ENCODE measurements at regions of chr2 and their contacts with region 1.

Region 1: GRCh38 chr2:203814661-203815540 is 52.7 kb upstream of the CTLA4 start:
- DNase-seq: peak; percentile 25 to 85 (median 42)
- ATAC-seq: peak; percentile 89
- H3K4me3 ChIP-seq: peak overlapping the region; percentile 25
- H3K4me3 Mint-ChIP-seq: peak overlapping the region; percentile 85
- H3K27ac ChIP-seq: no peak overlapping the region
- H3K27ac Mint-ChIP-seq: peak overlapping the region; percentile 52
- H3K4me1 ChIP-seq: peaks cover 39% of the 10 kb centered on the region
- H3K4me1 Mint-ChIP-seq: peaks cover 52% of the 10 kb centered on the region
- H3K27me3 ChIP-seq: no peaks in the 10 kb centered on the region
- H3K27me3 Mint-ChIP-seq: no peaks in the 10 kb centered on the region
- CTCF ChIP-seq: peak; percentile 81

Region 2: DNA sequence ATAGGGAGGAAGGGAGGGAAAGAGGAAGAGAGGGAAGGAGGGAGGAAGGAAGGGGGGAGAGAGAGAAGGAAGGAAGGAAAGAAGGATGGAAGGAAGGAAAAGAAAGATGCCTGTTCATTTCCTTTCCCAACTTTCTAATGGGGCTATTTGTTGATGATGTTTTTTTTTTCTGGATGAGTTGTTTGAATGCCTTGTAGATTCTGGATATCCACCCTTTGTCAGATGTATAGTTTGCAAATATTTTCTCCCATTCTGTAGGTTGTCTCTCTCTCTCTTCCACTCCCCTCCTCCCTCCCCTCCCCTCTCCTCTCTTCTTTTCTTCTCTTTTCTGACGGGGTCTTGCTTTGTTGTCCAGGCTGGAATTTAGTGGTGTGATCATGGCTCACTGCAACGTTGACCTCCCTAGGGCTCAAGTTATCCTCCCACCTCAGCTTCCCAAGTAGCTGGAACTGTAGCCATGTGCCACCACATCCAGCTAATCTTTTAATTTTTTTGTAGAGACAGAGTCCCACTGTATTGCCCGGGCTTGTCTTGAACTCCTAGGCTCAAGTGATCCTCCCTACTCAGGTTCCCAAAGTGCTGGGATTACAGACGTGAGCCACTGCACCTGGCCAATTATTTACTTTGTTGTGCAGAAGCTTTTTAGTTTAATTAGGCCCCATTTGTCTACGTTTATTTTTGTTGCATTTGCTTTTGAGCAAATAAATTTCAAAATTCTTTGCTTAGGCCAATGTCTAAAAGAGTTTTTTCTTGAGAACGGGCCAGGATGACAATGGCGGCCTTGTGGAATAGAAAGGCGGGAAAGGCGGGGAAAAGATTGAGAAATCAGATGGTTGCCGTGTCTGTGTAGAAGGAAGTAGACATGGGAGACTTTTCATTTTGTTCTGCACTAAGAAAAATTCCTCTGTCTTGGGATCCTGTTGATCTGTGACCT is 1237.4 kb before region 1 on chr2:
- CTCF ChIA-PET with region 1: no interaction called
- POLR2A ChIA-PET with region 1: no interaction called
- intact Hi-C with region 1: loop called in 1 of 2 experiments (anchors 5 kb)
- DNase-seq: no peak
- ATAC-seq: no peak
- H3K4me3 ChIP-seq: no peak overlapping the region
- H3K4me3 Mint-ChIP-seq: no peak overlapping the region
- H3K27ac ChIP-seq: no peak overlapping the region
- H3K27ac Mint-ChIP-seq: no peak overlapping the region
- H3K4me1 ChIP-seq: no peaks in the 10 kb centered on the region
- H3K4me1 Mint-ChIP-seq: no peaks in the 10 kb centered on the region
- H3K27me3 ChIP-seq: no peaks in the 10 kb centered on the region
- H3K27me3 Mint-ChIP-seq: no peaks in the 10 kb centered on the region
- CTCF ChIP-seq: no peak

Region 3: GRCh38 chr2:203280428-203281064 is 534.4 kb before region 1 on chr2:
- CTCF ChIA-PET with region 1: no interaction called
- POLR2A ChIA-PET with region 1: interaction called, 4 read pairs
- intact Hi-C with region 1: loop called in 1 of 2 experiments (anchors 10 kb)
- DNase-seq: no peak
- ATAC-seq: no peak
- H3K4me3 ChIP-seq: no peak overlapping the region
- H3K4me3 Mint-ChIP-seq: no peak overlapping the region
- H3K27ac ChIP-seq: no peak overlapping the region
- H3K27ac Mint-ChIP-seq: no peak overlapping the region
- H3K4me1 ChIP-seq: no peaks in the 10 kb centered on the region
- H3K4me1 Mint-ChIP-seq: no peaks in the 10 kb centered on the region
- H3K27me3 ChIP-seq: no peaks in the 10 kb centered on the region
- H3K27me3 Mint-ChIP-seq: no peaks in the 10 kb centered on the region
- CTCF ChIP-seq: no peak

Region 4: GRCh38 chr2:203718087-203718486 is 96.8 kb before region 1 on chr2:
- CTCF ChIA-PET with region 1: interaction called, 8 read pairs
- POLR2A ChIA-PET with region 1: interaction called, 28 read pairs
- intact Hi-C with region 1: no loop called
- DNase-seq: peak in 10 of 14 experiments; percentile 29 to 83 (median 44)
- ATAC-seq: peak; percentile 45
- H3K4me3 ChIP-seq: peak overlapping the region; percentile 21
- H3K4me3 Mint-ChIP-seq: peak overlapping the region; percentile 75
- H3K27ac ChIP-seq: peak overlapping the region; percentile 70 to 72
- H3K27ac Mint-ChIP-seq: peak overlapping the region; percentile 92
- H3K4me1 ChIP-seq: peaks cover 81% of the 10 kb centered on the region
- H3K4me1 Mint-ChIP-seq: peaks cover 97% of the 10 kb centered on the region
- H3K27me3 ChIP-seq: no peaks in the 10 kb centered on the region
- H3K27me3 Mint-ChIP-seq: no peaks in the 10 kb centered on the region
- CTCF ChIP-seq: no peak

Region 5: DNA sequence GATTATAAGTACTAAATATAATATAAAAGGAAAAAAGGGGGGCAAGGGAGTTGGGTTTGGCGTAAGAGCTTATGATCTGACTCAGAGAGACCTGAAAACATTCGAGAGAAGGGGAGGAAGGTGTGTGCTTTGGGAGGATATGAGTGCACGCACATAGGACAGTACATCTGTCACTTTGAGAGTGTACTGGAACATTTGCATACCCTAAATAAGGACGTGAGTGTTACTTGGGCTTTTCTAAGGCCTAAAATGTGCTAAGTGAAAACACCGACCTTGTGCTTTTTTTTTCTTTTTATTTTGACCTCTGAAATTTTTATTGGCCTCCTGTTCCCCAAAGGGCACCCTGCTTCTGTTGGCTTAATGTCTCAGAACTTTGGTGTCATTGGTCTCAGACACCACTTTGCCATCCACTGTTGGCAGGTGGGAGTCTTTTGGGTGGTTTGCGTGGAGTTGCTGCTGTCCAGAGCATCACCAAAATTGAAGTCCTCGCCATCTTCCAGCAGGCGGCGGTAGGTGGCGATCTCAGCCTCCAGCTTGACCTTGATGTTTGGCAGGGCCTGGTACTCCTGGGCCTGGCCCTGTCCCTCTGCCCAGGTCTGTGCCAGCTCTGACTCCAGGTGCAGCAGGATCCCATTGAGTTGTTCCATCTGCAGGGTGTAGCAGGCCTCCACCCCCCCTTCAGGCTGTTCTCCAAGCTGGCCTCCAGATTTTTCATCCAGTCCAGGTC is 50.8 kb before region 1 on chr2:
- CTCF ChIA-PET with region 1: no interaction called
- POLR2A ChIA-PET with region 1: no interaction called
- intact Hi-C with region 1: no loop called
- DNase-seq: peak in 6 of 14 experiments; percentile 23 to 45 (median 38)
- ATAC-seq: peak; percentile 96
- H3K4me3 ChIP-seq: no peak overlapping the region
- H3K4me3 Mint-ChIP-seq: peak overlapping the region; percentile 39
- H3K27ac ChIP-seq: peak overlapping the region; percentile 36 to 42
- H3K27ac Mint-ChIP-seq: peak overlapping the region; percentile 86
- H3K4me1 ChIP-seq: peaks cover 43% of the 10 kb centered on the region
- H3K4me1 Mint-ChIP-seq: peaks cover 86% of the 10 kb centered on the region
- H3K27me3 ChIP-seq: no peaks in the 10 kb centered on the region
- H3K27me3 Mint-ChIP-seq: no peaks in the 10 kb centered on the region
- CTCF ChIP-seq: no peak

Region 6: DNA sequence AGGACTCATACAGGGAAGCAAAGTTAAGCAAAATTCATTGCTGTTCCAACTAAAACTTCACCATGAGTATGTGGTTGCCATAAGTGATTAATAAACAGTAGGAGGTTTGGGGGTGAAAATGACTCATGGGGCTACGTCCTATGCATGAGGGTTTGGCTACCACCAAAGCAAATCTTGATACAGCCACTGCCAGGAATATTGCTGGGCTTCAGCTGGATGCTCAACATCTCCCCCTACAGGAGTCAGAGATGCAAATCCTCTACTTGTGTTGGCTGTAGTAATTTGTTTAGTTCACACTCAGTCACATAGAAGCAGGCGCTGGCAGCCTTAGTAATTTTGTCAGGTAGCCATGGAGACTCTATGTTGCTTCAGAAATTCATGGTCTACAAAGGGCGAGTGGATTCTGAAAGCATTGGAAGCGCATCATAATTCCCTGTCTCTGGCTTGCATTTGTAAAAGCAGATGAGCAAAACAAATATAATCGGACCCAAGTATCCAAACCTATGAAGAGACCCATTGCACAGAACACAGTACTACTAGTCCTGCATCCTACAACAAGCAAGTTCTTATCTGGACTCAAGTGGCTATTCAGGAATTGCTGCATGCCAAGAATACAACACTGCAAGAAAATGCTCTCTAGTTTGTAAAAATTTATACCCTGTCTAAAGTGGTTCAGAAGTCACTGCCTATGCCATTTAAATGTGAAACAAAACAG is 32.5 kb before region 1 on chr2:
- CTCF ChIA-PET with region 1: interaction called, 11 read pairs
- POLR2A ChIA-PET with region 1: interaction called, 3 read pairs
- intact Hi-C with region 1: no loop called
- DNase-seq: peak; percentile 35 to 86 (median 52)
- ATAC-seq: peak; percentile 92
- H3K4me3 ChIP-seq: no peak overlapping the region
- H3K4me3 Mint-ChIP-seq: no peak overlapping the region
- H3K27ac ChIP-seq: no peak overlapping the region
- H3K27ac Mint-ChIP-seq: peak overlapping the region; percentile 62
- H3K4me1 ChIP-seq: peaks cover 20% of the 10 kb centered on the region
- H3K4me1 Mint-ChIP-seq: peaks cover 54% of the 10 kb centered on the region
- H3K27me3 ChIP-seq: no peaks in the 10 kb centered on the region
- H3K27me3 Mint-ChIP-seq: no peaks in the 10 kb centered on the region
- CTCF ChIP-seq: peak; percentile 79

Region 7: DNA sequence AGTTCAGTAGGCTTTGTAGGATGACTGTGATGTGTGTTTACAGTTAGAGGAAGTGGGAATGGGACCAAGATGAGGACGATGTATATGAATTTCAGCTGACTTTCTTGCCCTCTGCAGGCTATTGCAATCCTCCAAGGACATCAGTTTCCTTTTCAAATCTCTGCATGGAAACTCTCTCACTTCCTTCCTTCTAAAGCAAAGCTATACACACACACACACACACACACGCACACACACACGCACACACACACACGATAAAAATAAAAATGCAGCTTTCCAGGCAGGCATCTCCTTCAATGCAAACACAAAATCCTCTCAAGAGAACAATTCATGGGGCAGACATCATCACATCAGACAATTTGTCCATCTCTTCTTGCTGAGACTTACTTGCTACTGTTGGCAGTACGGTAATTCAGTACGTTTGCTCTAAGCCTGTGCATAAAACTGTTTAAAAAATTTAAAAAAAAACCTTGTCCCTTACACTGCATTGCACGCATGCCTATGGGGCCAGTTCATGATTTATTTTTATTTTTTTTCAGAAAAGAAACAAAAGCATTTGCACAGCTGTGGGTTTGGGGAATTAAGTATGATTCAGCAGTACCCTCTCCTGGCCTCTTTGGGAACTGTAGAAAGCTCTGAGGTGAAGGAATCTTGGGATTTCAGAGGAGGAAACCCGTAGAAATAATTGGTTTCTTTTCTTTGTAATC is 94.5 kb after region 1 on chr2:
- CTCF ChIA-PET with region 1: interaction called, 19 read pairs
- POLR2A ChIA-PET with region 1: interaction called, 9 read pairs
- intact Hi-C with region 1: loop called (anchors 1 kb)
- DNase-seq: peak in 7 of 14 experiments; percentile 10 to 70 (median 45)
- ATAC-seq: peak; percentile 82
- H3K4me3 ChIP-seq: peak overlapping the region; percentile 39
- H3K4me3 Mint-ChIP-seq: peak overlapping the region; percentile 5
- H3K27ac ChIP-seq: no peak overlapping the region
- H3K27ac Mint-ChIP-seq: peak overlapping the region; percentile 18
- H3K4me1 ChIP-seq: peaks cover 13% of the 10 kb centered on the region
- H3K4me1 Mint-ChIP-seq: peaks cover 19% of the 10 kb centered on the region
- H3K27me3 ChIP-seq: no peaks in the 10 kb centered on the region
- H3K27me3 Mint-ChIP-seq: no peaks in the 10 kb centered on the region
- CTCF ChIP-seq: peak; percentile 87

Region 8: DNA sequence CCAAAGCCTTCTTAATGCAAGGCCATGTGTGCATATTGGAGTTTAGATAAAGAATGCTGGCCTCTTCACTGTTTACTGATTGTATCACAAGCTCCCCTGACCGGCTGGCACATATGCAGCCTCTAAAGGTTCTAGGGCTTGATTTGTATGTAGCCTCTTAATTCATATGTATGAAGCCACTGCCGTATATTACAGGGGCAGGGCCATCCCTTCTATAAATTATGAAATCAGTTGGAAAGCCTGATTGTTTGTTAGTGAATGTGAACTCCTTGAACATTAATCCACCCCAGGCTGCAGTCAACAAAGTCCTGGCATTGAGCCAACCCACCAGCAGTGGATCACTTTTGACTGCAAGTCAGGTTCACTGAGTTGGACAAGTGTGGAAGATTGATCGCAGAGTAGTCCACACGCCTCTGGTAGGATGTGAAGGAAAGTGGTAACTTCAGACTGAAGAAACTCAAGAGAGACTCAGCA is 668.7 kb after region 1 on chr2:
- CTCF ChIA-PET with region 1: no interaction called
- POLR2A ChIA-PET with region 1: no interaction called
- intact Hi-C with region 1: no loop called
- DNase-seq: no peak
- ATAC-seq: no peak
- H3K4me3 ChIP-seq: no peak overlapping the region
- H3K4me3 Mint-ChIP-seq: no peak overlapping the region
- H3K27ac ChIP-seq: no peak overlapping the region
- H3K27ac Mint-ChIP-seq: no peak overlapping the region
- H3K4me1 ChIP-seq: no peaks in the 10 kb centered on the region
- H3K4me1 Mint-ChIP-seq: no peaks in the 10 kb centered on the region
- H3K27me3 ChIP-seq: no peaks in the 10 kb centered on the region
- H3K27me3 Mint-ChIP-seq: peaks cover 5% of the 10 kb centered on the region
- CTCF ChIP-seq: no peak

Measured in CD4-positive, alpha-beta T cell (primary cell).